ENCODE measurements at regions of chr4 and their contacts with region 1.

Region 1: DNA sequence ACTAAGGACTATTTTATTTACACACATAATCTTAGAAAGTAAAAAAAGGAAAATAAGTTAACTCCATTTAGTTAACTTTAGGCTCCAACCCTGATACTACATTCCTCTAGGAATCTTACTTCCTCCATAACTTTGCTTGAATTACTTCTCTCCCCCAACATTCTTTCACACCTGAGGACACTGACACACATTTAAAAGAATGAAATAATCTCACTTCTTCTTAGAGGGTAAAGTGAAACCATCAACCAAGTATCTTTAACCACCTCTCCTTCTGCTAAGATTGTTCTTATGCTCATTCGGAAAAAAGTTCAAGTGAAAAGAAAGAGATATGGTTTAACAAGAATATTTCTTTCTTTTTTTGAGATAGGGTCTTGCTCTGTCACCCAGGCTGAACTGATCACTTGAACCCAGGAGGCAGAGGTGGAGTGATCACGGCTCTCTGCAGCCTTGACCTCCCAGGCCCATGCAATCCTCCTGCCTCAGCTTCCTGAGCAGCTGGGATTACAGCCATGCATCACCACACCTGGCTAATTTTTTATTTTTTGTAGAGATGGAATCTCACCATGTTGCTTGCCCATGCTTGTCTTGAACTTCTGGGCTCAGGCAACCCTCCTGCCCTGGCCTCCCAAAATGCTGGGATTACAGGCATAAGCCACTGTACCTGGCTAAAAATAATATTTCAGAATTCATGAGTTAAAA is 28.5 kb downstream of the SLC25A4 start:
- DNase-seq: no peak
- ATAC-seq: no peak
- H3K4me3 ChIP-seq: no peak overlapping the region
- H3K4me3 Mint-ChIP-seq: no peak overlapping the region
- H3K27ac ChIP-seq: no peak overlapping the region
- H3K27ac Mint-ChIP-seq: no peak overlapping the region
- H3K4me1 ChIP-seq: peaks cover under 1 to 4% of the 10 kb centered on the region in 2 experiments
- H3K4me1 Mint-ChIP-seq: peaks cover 7 to 15% (median 11%) of the 10 kb centered on the region in 3 donors
- H3K27me3 ChIP-seq: peaks cover 0 to 2% of the 10 kb centered on the region in 2 experiments
- H3K27me3 Mint-ChIP-seq: peaks cover 0 to 4% of the 10 kb centered on the region in 2 donors

Region 2: GRCh38 chr4:184335520-184335919 is 836.0 kb before region 1 on chr4:
- CTCF ChIA-PET with region 1: no interaction called
- POLR2A ChIA-PET with region 1: no interaction called
- DNase-seq: no peak
- ATAC-seq: no peak
- H3K4me3 ChIP-seq: no peak overlapping the region
- H3K4me3 Mint-ChIP-seq: no peak overlapping the region
- H3K27ac ChIP-seq: no peak overlapping the region
- H3K27ac Mint-ChIP-seq: no peak overlapping the region
- H3K4me1 ChIP-seq: peaks cover 0 to 3% of the 10 kb centered on the region in 2 experiments
- H3K4me1 Mint-ChIP-seq: peaks cover 6 to 10% (median 8%) of the 10 kb centered on the region in 3 donors
- H3K27me3 ChIP-seq: no peaks in the 10 kb centered on the region
- H3K27me3 Mint-ChIP-seq: no peaks in the 10 kb centered on the region

Region 3: GRCh38 chr4:184506527-184507121 is 664.9 kb before region 1 on chr4:
- CTCF ChIA-PET with region 1: no interaction called
- POLR2A ChIA-PET with region 1: interaction called in 1 of 2 experiments, 10 read pairs
- DNase-seq: peak in 21 of 35 experiments; percentile 2 to 38 (median 14)
- ATAC-seq: peak; percentile 22 to 84 (median 54)
- H3K4me3 ChIP-seq: no peak overlapping the region
- H3K4me3 Mint-ChIP-seq: no peak overlapping the region
- H3K27ac ChIP-seq: no peak overlapping the region
- H3K27ac Mint-ChIP-seq: peak overlapping the region in 1 of 2 donors; percentile 1
- H3K4me1 ChIP-seq: peaks cover 5 to 27% of the 10 kb centered on the region in 2 experiments
- H3K4me1 Mint-ChIP-seq: peaks cover 19 to 36% (median 27%) of the 10 kb centered on the region in 3 donors
- H3K27me3 ChIP-seq: no peaks in the 10 kb centered on the region
- H3K27me3 Mint-ChIP-seq: no peaks in the 10 kb centered on the region

Region 4: GRCh38 chr4:185364886-185365285 is 193.4 kb after region 1 on chr4:
- CTCF ChIA-PET with region 1: no interaction called
- POLR2A ChIA-PET with region 1: no interaction called
- DNase-seq: no peak
- ATAC-seq: no peak
- H3K4me3 ChIP-seq: no peak overlapping the region
- H3K4me3 Mint-ChIP-seq: no peak overlapping the region
- H3K27ac ChIP-seq: no peak overlapping the region
- H3K27ac Mint-ChIP-seq: no peak overlapping the region
- H3K4me1 ChIP-seq: no peaks in the 10 kb centered on the region
- H3K4me1 Mint-ChIP-seq: no peaks in the 10 kb centered on the region
- H3K27me3 ChIP-seq: no peaks in the 10 kb centered on the region
- H3K27me3 Mint-ChIP-seq: no peaks in the 10 kb centered on the region

Region 5: DNA sequence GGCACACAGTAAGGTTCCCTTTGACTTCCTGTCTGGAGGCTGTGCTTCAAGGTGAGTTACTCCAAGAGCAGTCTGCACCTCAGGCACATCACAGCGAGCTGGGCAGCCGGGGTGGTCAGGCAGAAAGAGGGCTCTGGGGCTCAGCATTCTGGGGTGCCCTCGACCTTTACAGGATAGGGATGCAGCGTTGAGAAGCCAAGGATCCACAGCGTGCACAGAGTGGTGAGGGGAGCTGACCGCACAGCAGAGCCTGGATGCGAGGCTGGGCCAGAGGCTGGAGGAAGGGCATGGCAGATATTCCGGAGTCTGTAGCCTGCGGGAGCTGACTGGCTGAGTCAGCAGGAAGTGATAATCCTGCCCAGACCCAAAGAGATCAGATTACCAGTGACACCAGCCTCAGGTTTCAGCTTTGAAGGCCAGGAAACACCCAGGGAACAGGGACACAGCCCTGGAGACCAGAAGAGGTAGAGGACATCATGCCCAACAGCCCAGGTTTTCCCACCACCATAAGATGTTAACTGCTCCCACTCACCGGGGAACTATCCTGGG is 402.2 kb after region 1 on chr4:
- CTCF ChIA-PET with region 1: no interaction called
- POLR2A ChIA-PET with region 1: no interaction called
- DNase-seq: no peak
- ATAC-seq: no peak
- H3K4me3 ChIP-seq: no peak overlapping the region
- H3K4me3 Mint-ChIP-seq: no peak overlapping the region
- H3K27ac ChIP-seq: no peak overlapping the region
- H3K27ac Mint-ChIP-seq: no peak overlapping the region
- H3K4me1 ChIP-seq: no peaks in the 10 kb centered on the region
- H3K4me1 Mint-ChIP-seq: no peaks in the 10 kb centered on the region
- H3K27me3 ChIP-seq: peaks cover 0 to 15% of the 10 kb centered on the region in 2 experiments
- H3K27me3 Mint-ChIP-seq: peaks cover 21 to 23% of the 10 kb centered on the region in 2 donors

Measured in T-cell (primary cell).